ENCODE measurements at regions of chrX and their contacts with region 1.

Region 1: DNA sequence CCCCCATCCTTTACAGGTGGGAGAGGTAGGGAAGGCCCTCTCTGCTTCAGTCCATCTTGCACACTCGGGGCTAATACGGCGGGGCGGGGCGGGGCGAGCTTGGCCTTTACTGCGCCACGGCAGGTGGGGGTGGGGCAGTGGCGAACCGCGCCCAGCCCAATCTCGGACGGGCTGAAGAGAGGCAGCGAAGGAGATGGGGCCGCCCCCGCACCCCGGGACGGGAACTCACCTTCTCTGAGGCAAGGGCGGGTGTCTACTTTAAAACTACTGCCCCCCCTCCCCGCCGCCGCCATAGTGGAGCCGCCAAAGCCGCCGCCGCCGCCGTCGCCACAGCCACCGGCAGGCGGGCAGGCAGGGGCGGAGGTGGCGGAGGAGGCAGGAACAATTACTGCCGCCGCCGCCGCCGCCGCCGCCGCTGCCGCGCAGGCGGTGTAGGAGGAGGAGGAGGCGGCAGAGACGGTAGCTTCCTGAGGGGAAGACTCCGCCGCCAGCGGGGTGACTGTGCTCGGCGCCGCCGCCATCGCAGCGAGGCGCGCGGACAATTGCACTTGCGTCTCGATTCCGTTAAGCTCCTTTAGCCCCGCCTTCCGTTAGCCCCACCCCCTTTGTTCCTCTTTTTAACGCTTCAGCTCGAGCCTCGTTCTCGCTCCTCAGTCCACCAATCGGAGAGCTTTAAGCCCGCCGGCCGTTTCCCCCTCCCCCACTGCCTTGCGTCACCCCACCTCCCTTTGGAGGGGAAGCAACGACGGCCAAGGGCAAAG is at the start of gene ZMAT1:
- DNase-seq: peak; percentile 85 to 94 (median 89)
- H3K4me3 ChIP-seq: peak within 1 kb of the TSS in 1 of 2 donors; percentile 45
- H3K4me3 Mint-ChIP-seq: peak within 1 kb of the TSS; percentile 81 to 93 (median 88)
- H3K27ac ChIP-seq: peak within 1 kb of the TSS; percentile 66
- H3K27ac Mint-ChIP-seq: peak within 1 kb of the TSS; percentile 94 to 99 (median 95)
- H3K4me1 ChIP-seq: peaks cover 8% of the 10 kb centered on the region
- H3K4me1 Mint-ChIP-seq: peaks cover 6 to 18% (median 16%) of the 10 kb centered on the region in 4 donors
- H3K27me3 ChIP-seq: no peaks in the 10 kb centered on the region
- H3K27me3 Mint-ChIP-seq: peaks cover 0 to 2% of the 10 kb centered on the region in 2 donors
- total RNA-seq, gene ZMAT1: 39.1 to 40.0 TPM

Region 2: GRCh38 chrX:100685284-100685996 is 1246.2 kb before region 1 on chrX:
- CTCF ChIA-PET with region 1: no interaction called
- POLR2A ChIA-PET with region 1: no interaction called
- intact Hi-C with region 1: no loop called
- DNase-seq: peak; percentile 43 to 68 (median 66)
- H3K4me3 ChIP-seq: no peak overlapping the region
- H3K4me3 Mint-ChIP-seq: no peak overlapping the region
- H3K27ac ChIP-seq: no peak overlapping the region
- H3K27ac Mint-ChIP-seq: no peak overlapping the region
- H3K4me1 ChIP-seq: no peaks in the 10 kb centered on the region
- H3K4me1 Mint-ChIP-seq: peaks cover 0 to 2% (median 0%) of the 10 kb centered on the region in 4 donors
- H3K27me3 ChIP-seq: no peaks in the 10 kb centered on the region
- H3K27me3 Mint-ChIP-seq: peaks cover 0 to 3% of the 10 kb centered on the region in 2 donors

Region 3: GRCh38 chrX:100819837-100820666 is 1111.6 kb before region 1 on chrX and contains the start of gene CSTF2:
- CTCF ChIA-PET with region 1: no interaction called
- POLR2A ChIA-PET with region 1: no interaction called
- intact Hi-C with region 1: loop called (anchors 2 kb)
- DNase-seq: peak; percentile 82 to 90 (median 84)
- H3K4me3 ChIP-seq: peak within 1 kb of the TSS; percentile 74 to 81
- H3K4me3 Mint-ChIP-seq: peak within 1 kb of the TSS; percentile 84 to 92 (median 88)
- H3K27ac ChIP-seq: peak within 1 kb of the TSS; percentile 83
- H3K27ac Mint-ChIP-seq: peak within 1 kb of the TSS; percentile 80 to 99 (median 95)
- H3K4me1 ChIP-seq: peaks cover 4% of the 10 kb centered on the region
- H3K4me1 Mint-ChIP-seq: peaks cover 5 to 15% (median 8%) of the 10 kb centered on the region in 4 donors
- H3K27me3 ChIP-seq: no peaks in the 10 kb centered on the region
- H3K27me3 Mint-ChIP-seq: peaks cover 0 to 2% of the 10 kb centered on the region in 2 donors
- total RNA-seq, gene CSTF2: 14.7 to 15.2 TPM

Region 4: GRCh38 chrX:101407748-101408531 is 523.7 kb before region 1 on chrX and contains the starts of genes GLA and HNRNPH2:
- CTCF ChIA-PET with region 1: no interaction called
- POLR2A ChIA-PET with region 1: interaction called, 7 read pairs
- intact Hi-C with region 1: loop called (anchors 1 kb)
- DNase-seq: peak; percentile 85 to 96 (median 91)
- H3K4me3 ChIP-seq: peak within 1 kb of the TSS; percentile 89 to 99
- H3K4me3 Mint-ChIP-seq: peak within 1 kb of the TSS; percentile 85 to 96 (median 94)
- H3K27ac ChIP-seq: peak within 1 kb of the TSS; percentile 97
- H3K27ac Mint-ChIP-seq: peak within 1 kb of the TSS; percentile 95 to 99 (median 98)
- H3K4me1 ChIP-seq: peaks cover 27% of the 10 kb centered on the region
- H3K4me1 Mint-ChIP-seq: peaks cover 14 to 36% (median 24%) of the 10 kb centered on the region in 4 donors
- H3K27me3 ChIP-seq: no peaks in the 10 kb centered on the region
- H3K27me3 Mint-ChIP-seq: no peaks in the 10 kb centered on the region
- total RNA-seq, gene GLA: 13.1 TPM
- total RNA-seq, gene HNRNPH2: 40.1 to 40.9 TPM

Region 5: GRCh38 chrX:101617211-101618191 is 314.2 kb before region 1 on chrX and contains the start of gene ARMCX6:
- CTCF ChIA-PET with region 1: no interaction called
- POLR2A ChIA-PET with region 1: interaction called, 14 read pairs
- intact Hi-C with region 1: no loop called
- DNase-seq: peak; percentile 66 to 82 (median 68)
- H3K4me3 ChIP-seq: peak within 1 kb of the TSS; percentile 47 to 82
- H3K4me3 Mint-ChIP-seq: peak within 1 kb of the TSS; percentile 90 to 97 (median 95)
- H3K27ac ChIP-seq: peak within 1 kb of the TSS; percentile 65
- H3K27ac Mint-ChIP-seq: peak within 1 kb of the TSS; percentile 86 to 97 (median 94)
- H3K4me1 ChIP-seq: peaks cover 14% of the 10 kb centered on the region
- H3K4me1 Mint-ChIP-seq: peaks cover 3 to 22% (median 7%) of the 10 kb centered on the region in 4 donors
- H3K27me3 ChIP-seq: no peaks in the 10 kb centered on the region
- H3K27me3 Mint-ChIP-seq: no peaks in the 10 kb centered on the region
- total RNA-seq, gene ARMCX6: 36.6 to 40.5 TPM

Region 6: DNA sequence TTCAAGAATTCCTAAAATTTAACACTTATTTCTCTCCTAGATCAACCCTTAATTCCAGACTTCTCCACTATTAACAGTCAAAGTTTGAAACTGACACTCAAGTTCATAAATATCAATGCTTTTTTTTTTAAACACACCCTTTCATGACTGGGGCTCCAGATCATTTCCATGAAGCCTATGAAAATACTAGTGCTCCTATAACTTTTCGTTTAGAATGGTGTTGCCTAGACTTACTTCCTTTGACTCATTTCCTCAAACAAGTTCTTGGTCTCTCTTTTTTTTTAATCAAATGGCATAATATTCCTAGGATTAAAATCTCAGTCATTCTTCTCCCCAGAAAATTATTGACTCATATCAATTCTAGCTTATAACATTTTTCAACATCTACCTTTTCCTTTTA is 12.9 kb before region 1 on chrX:
- CTCF ChIA-PET with region 1: interaction called, 8 read pairs
- POLR2A ChIA-PET with region 1: interaction called, 16 read pairs
- intact Hi-C with region 1: no loop called
- DNase-seq: no peak
- H3K4me3 ChIP-seq: no peak overlapping the region
- H3K4me3 Mint-ChIP-seq: no peak overlapping the region
- H3K27ac ChIP-seq: no peak overlapping the region
- H3K27ac Mint-ChIP-seq: peak overlapping the region in 1 of 7 donors; percentile 30
- H3K4me1 ChIP-seq: no peaks in the 10 kb centered on the region
- H3K4me1 Mint-ChIP-seq: no peaks in the 10 kb centered on the region
- H3K27me3 ChIP-seq: no peaks in the 10 kb centered on the region
- H3K27me3 Mint-ChIP-seq: no peaks in the 10 kb centered on the region

Region 7: GRCh38 chrX:101942889-101943288 is 11.2 kb after region 1 on chrX:
- CTCF ChIA-PET with region 1: no interaction called
- POLR2A ChIA-PET with region 1: no interaction called
- intact Hi-C with region 1: no loop called
- DNase-seq: no peak
- H3K4me3 ChIP-seq: no peak overlapping the region
- H3K4me3 Mint-ChIP-seq: no peak overlapping the region
- H3K27ac ChIP-seq: no peak overlapping the region
- H3K27ac Mint-ChIP-seq: no peak overlapping the region
- H3K4me1 ChIP-seq: no peaks in the 10 kb centered on the region
- H3K4me1 Mint-ChIP-seq: no peaks in the 10 kb centered on the region
- H3K27me3 ChIP-seq: no peaks in the 10 kb centered on the region
- H3K27me3 Mint-ChIP-seq: peaks cover 5 to 14% of the 10 kb centered on the region in 2 donors

Region 8: GRCh38 chrX:101999644-102000539 is 68.2 kb after region 1 on chrX:
- CTCF ChIA-PET with region 1: no interaction called
- POLR2A ChIA-PET with region 1: no interaction called
- intact Hi-C with region 1: no loop called
- DNase-seq: peak in 1 of 5 donors; percentile 15
- H3K4me3 ChIP-seq: no peak overlapping the region
- H3K4me3 Mint-ChIP-seq: no peak overlapping the region
- H3K27ac ChIP-seq: no peak overlapping the region
- H3K27ac Mint-ChIP-seq: no peak overlapping the region
- H3K4me1 ChIP-seq: no peaks in the 10 kb centered on the region
- H3K4me1 Mint-ChIP-seq: no peaks in the 10 kb centered on the region
- H3K27me3 ChIP-seq: no peaks in the 10 kb centered on the region
- H3K27me3 Mint-ChIP-seq: peaks cover 3 to 9% of the 10 kb centered on the region in 2 donors

Region 9: GRCh38 chrX:102712952-102713625 is 781.4 kb after region 1 on chrX:
- CTCF ChIA-PET with region 1: no interaction called
- POLR2A ChIA-PET with region 1: no interaction called
- intact Hi-C with region 1: no loop called
- DNase-seq: peak in 1 of 5 donors; percentile 4
- H3K4me3 ChIP-seq: no peak overlapping the region
- H3K4me3 Mint-ChIP-seq: peak overlapping the region; percentile 78 to 88 (median 82)
- H3K27ac ChIP-seq: no peak overlapping the region
- H3K27ac Mint-ChIP-seq: peak overlapping the region in 4 of 7 donors; percentile 27 to 59 (median 43)
- H3K4me1 ChIP-seq: peaks cover 9% of the 10 kb centered on the region
- H3K4me1 Mint-ChIP-seq: peaks cover 13 to 23% (median 15%) of the 10 kb centered on the region in 4 donors
- H3K27me3 ChIP-seq: no peaks in the 10 kb centered on the region
- H3K27me3 Mint-ChIP-seq: peaks cover 10 to 16% of the 10 kb centered on the region in 2 donors

Measured in CD4-positive, alpha-beta memory T cell (primary cell).